ENCODE measurements at regions of chr1 and their contacts with region 1.

Region 1: DNA sequence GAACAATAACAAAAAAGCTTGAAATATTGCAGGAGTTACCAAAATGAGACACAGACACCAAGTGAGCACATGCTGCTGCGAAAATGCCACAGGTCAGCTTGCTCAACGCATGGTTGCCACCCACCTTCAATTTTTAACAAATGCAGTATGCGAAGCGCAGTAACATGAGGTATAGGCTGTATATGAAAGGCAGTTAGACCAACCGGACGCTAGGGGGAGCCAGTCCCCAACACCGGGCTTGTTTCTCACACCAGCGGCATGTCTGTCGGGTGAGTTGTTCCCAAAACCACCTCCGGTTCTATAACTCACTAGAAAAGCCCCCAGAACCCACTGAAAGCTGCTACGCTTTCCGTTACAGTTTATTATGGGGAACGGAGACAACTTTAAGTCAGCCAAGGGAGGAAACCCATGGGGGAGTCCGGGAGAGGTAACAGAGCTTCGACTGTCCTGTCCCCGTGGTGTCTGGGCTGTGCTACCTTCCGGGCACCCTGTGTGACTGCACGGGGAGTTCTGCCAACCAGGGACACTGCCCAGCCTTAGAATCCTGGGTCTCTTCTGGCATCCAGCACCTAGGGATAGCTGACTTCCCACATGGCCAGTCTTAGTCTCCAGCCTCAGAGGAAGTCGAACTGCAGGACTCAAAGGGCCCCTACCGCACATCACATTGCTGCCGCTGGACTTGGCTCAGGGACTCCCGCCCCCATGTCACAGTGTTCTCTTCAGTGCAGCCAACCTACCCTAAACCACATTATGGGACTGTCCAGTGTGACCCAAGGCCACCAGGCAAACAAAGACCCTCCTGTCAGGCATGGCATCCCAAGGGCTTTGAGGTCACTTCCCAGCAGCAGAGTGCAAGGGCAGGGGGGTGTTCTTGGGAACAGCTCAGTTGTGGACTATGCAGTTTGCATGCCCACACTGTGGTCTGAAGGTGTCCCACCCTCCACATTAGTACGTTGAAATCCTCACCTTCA is 14.0 kb downstream of the RNF187 start:
- DNase-seq: peak; percentile 84
- H3K4me3 ChIP-seq: peak overlapping the region in 1 of 2 experiments; percentile 24; a peak in 2 of 4 replicates
- H3K27ac ChIP-seq: no peak overlapping the region
- H3K4me1 ChIP-seq: peaks cover 0 to 7% of the 10 kb centered on the region in 2 experiments; a peak in 1 of 4 replicates
- H3K27me3 ChIP-seq: no peaks in the 10 kb centered on the region; the same call in 1 of the 2 replicates
- CTCF ChIP-seq: peak; percentile 94
- EP300 ChIP-seq: no peak
- RAD21 ChIP-seq: peak; percentile 77

Region 2: DNA sequence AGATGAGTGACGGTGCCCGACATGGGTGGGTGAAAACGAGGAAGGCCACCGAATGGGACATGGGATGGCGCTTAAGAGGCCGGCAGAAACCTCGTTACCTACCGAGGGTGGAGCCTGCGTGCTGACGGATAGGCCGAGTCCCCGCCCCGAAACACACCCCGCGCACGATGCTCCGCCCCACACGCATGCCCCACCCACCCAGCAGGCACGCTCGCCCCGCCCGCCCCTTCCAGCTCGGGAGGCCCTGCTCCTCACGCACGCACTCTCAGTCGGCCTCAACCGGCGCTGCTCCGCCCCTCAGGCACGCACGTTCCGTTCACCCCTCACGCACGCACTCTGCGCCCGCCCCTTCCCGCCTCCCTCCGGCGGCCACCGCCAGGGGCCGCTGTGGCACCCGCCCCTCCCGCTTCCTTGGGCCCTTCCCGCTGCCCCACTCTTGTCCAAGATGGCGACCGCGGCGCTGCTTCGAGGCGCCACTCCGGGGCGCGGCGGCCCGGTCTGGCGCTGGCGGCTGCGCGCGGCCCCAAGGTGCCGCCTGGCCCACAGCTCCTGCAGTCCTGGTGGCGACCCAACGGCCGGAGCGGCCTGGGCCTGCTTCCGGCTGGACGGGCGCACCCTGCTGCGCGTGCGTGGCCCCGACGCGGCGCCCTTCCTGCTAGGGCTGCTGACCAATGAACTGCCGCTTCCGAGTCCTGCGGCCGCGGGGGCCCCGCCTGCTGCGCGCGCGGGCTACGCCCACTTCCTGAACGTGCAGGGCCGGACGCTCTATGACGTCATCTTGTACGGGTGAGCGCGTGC is 335.6 kb before region 1 on chr1 and contains the start of gene IBA57:
- CTCF ChIA-PET with region 1: no interaction called
- POLR2A ChIA-PET with region 1: no interaction called
- DNase-seq: peak; percentile 98
- H3K4me3 ChIP-seq: peak within 1 kb of the TSS; percentile 74 to 79
- H3K27ac ChIP-seq: peak within 1 kb of the TSS; percentile 93 to 98
- H3K4me1 ChIP-seq: peaks cover 13 to 25% of the 10 kb centered on the region in 2 experiments; a peak in 3 of 4 replicates
- H3K27me3 ChIP-seq: no peaks in the 10 kb centered on the region
- CTCF ChIP-seq: peak; percentile 79
- EP300 ChIP-seq: no peak; a peak in 1 of 4 replicates
- RAD21 ChIP-seq: no peak
- polyA plus RNA-seq, gene IBA57: 1.8 TPM in 2 replicates

Region 3: GRCh38 chr1:228393248-228393699 is 107.9 kb before region 1 on chr1:
- CTCF ChIA-PET with region 1: no interaction called
- POLR2A ChIA-PET with region 1: no interaction called
- DNase-seq: no peak
- H3K4me3 ChIP-seq: no peak overlapping the region
- H3K27ac ChIP-seq: no peak overlapping the region
- H3K4me1 ChIP-seq: peaks cover 0 to 13% of the 10 kb centered on the region in 2 experiments; a peak in 1 of 4 replicates
- H3K27me3 ChIP-seq: no peaks in the 10 kb centered on the region
- CTCF ChIP-seq: peak; percentile 48
- EP300 ChIP-seq: no peak
- RAD21 ChIP-seq: no peak

Region 4: GRCh38 chr1:228486596-228487335 is 14.4 kb before region 1 on chr1:
- CTCF ChIA-PET with region 1: interaction called, 41 read pairs
- POLR2A ChIA-PET with region 1: no interaction called
- DNase-seq: peak; percentile 80
- H3K4me3 ChIP-seq: peak overlapping the region; percentile 79 to 96
- H3K27ac ChIP-seq: peak overlapping the region; percentile 90 to 97
- H3K4me1 ChIP-seq: peaks cover 0 to 10% of the 10 kb centered on the region in 2 experiments; a peak in 2 of 4 replicates
- H3K27me3 ChIP-seq: no peaks in the 10 kb centered on the region
- CTCF ChIP-seq: no peak
- EP300 ChIP-seq: no peak
- RAD21 ChIP-seq: no peak

Region 5: GRCh38 chr1:228515200-228515834 is 14.1 kb after region 1 on chr1:
- CTCF ChIA-PET with region 1: interaction called, 55 read pairs
- POLR2A ChIA-PET with region 1: no interaction called
- DNase-seq: peak; percentile 76
- H3K4me3 ChIP-seq: peak overlapping the region in 1 of 2 experiments; percentile 35; a peak in 1 of 4 replicates
- H3K27ac ChIP-seq: no peak overlapping the region
- H3K4me1 ChIP-seq: no peaks in the 10 kb centered on the region
- H3K27me3 ChIP-seq: peaks cover 39% of the 10 kb centered on the region
- CTCF ChIP-seq: peak; percentile 87
- EP300 ChIP-seq: no peak
- RAD21 ChIP-seq: peak; percentile 85

Measured in SK-N-SH (cell line).